HepG2 (cell line): ENCODE measurements at regions of chr1 and their contacts with region 1.

Region 1: DNA sequence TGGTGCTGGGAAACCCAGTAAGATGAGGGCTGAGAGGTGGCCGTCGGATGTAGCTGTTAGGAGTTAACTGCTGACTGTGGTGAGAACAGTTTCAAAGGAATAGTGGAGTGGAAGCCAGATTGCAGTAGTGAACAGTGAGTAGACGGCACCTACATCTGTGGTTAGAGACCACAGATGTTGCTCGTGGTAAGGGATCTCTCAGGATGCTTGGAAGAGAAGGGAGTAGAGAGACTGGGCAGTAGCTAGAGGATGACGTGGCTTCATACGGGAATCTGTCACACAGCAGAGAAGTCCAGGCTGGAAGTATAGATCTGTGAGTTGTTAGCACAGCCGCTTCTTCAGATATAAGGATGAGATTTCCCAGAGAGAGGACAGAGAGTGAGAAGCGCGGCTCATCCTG is 7.8 kb upstream of the ARTN start:
- DNase-seq: no peak
- ATAC-seq: no peak
- H3K4me3 ChIP-seq: no peak overlapping the region
- H3K27ac ChIP-seq: no peak overlapping the region
- H3K4me1 ChIP-seq: no peaks in the 10 kb centered on the region; the same call in 1 of the 2 replicates
- H3K27me3 ChIP-seq: no peaks in the 10 kb centered on the region
- CTCF ChIP-seq: no peak
- EP300 ChIP-seq: no peak
- POLR2A ChIP-seq: no peak
- RAD21 ChIP-seq: no peak

Region 2: GRCh38 chr1:43402089-43402865 is 523.6 kb before region 1 on chr1:
- CTCF ChIA-PET with region 1: no interaction called
- POLR2A ChIA-PET with region 1: no interaction called
- in situ Hi-C with region 1: no loop called
- intact Hi-C with region 1: loop called (anchors 5 kb)
- DNase-seq: no peak
- ATAC-seq: no peak
- H3K4me3 ChIP-seq: no peak overlapping the region
- H3K27ac ChIP-seq: no peak overlapping the region
- H3K4me1 ChIP-seq: peaks cover 10% of the 10 kb centered on the region
- H3K27me3 ChIP-seq: no peaks in the 10 kb centered on the region
- CTCF ChIP-seq: no peak
- EP300 ChIP-seq: no peak
- POLR2A ChIP-seq: no peak
- RAD21 ChIP-seq: no peak

Region 3: GRCh38 chr1:43602990-43603389 is 322.9 kb before region 1 on chr1:
- CTCF ChIA-PET with region 1: no interaction called
- POLR2A ChIA-PET with region 1: no interaction called
- in situ Hi-C with region 1: no loop called
- intact Hi-C with region 1: no loop called
- DNase-seq: no peak
- ATAC-seq: peak; percentile 3; the same call in 1 of the 3 replicates
- H3K4me3 ChIP-seq: no peak overlapping the region
- H3K27ac ChIP-seq: no peak overlapping the region
- H3K4me1 ChIP-seq: no peaks in the 10 kb centered on the region
- H3K27me3 ChIP-seq: no peaks in the 10 kb centered on the region
- CTCF ChIP-seq: no peak
- EP300 ChIP-seq: no peak
- POLR2A ChIP-seq: 0 out of 4 replicates have a peak, but pooled peaks of 1 of the 2 experiments have one; percentile 15
- RAD21 ChIP-seq: no peak